ENCODE measurements at regions of chr12 and their contacts with region 1.

Region 1: DNA sequence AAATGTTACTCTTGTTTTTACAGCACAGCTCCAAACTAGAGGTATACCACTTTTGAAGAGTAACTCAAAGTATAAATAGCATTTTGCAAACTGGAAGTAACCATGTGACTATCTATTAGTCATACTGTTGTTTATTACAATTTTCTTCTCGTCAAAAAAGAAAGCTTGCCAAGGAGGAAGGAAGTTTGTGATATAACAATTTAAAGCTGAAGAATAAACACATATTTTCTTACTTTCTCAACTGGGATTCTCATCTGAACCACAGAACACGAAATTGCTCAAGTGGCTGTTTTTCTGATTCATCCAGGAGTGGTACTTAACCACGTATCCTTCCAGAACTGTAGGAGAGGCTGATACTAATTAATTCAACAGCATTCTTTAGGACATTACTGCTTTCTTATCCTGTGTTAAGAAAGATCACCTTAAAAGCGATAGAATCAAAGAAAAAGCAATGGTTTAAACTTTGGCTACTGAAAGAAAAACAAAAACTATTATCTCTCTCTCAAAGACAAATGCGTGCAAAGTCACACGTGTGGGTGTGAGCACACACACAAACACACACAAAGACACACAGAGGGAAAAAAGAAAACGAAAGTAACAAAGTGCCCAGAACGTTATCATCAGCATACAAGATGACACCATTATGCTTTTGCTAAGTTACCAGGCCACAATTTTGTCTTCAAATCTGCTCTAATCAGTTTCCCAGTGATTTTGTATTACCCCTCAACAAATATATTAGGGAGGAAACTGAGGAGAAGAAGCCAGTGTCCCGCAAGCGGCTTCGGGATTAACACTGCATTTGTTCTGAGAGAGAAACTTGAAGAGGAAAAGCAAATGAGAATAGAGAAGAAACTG is at the start of gene CLEC2B:
- DNase-seq: peak; percentile 17
- H3K4me3 Mint-ChIP-seq: peak within 1 kb of the TSS; percentile 93
- H3K27ac Mint-ChIP-seq: peak within 1 kb of the TSS; percentile 97
- H3K4me1 Mint-ChIP-seq: peaks cover 45% of the 10 kb centered on the region
- H3K27me3 Mint-ChIP-seq: no peaks in the 10 kb centered on the region
- total RNA-seq, gene CLEC2B: 13.1 and 14.3 TPM in 2 replicates

Region 2: GRCh38 chr12:9244894-9245293 is 624.6 kb before region 1 on chr12:
- intact Hi-C with region 1: loop called (anchors 2 kb)
- DNase-seq: no peak
- H3K4me3 Mint-ChIP-seq: peak overlapping the region; percentile 66
- H3K27ac Mint-ChIP-seq: peak overlapping the region; percentile 95
- H3K4me1 Mint-ChIP-seq: peaks cover 23% of the 10 kb centered on the region
- H3K27me3 Mint-ChIP-seq: peaks cover 2% of the 10 kb centered on the region

Region 3: GRCh38 chr12:9673404-9674225 is 195.9 kb before region 1 on chr12:
- intact Hi-C with region 1: loop called (anchors 2 kb)
- DNase-seq: no peak
- H3K4me3 Mint-ChIP-seq: peak overlapping the region; percentile 90
- H3K27ac Mint-ChIP-seq: peak overlapping the region; percentile 97
- H3K4me1 Mint-ChIP-seq: peaks cover 73% of the 10 kb centered on the region
- H3K27me3 Mint-ChIP-seq: no peaks in the 10 kb centered on the region

Region 4: DNA sequence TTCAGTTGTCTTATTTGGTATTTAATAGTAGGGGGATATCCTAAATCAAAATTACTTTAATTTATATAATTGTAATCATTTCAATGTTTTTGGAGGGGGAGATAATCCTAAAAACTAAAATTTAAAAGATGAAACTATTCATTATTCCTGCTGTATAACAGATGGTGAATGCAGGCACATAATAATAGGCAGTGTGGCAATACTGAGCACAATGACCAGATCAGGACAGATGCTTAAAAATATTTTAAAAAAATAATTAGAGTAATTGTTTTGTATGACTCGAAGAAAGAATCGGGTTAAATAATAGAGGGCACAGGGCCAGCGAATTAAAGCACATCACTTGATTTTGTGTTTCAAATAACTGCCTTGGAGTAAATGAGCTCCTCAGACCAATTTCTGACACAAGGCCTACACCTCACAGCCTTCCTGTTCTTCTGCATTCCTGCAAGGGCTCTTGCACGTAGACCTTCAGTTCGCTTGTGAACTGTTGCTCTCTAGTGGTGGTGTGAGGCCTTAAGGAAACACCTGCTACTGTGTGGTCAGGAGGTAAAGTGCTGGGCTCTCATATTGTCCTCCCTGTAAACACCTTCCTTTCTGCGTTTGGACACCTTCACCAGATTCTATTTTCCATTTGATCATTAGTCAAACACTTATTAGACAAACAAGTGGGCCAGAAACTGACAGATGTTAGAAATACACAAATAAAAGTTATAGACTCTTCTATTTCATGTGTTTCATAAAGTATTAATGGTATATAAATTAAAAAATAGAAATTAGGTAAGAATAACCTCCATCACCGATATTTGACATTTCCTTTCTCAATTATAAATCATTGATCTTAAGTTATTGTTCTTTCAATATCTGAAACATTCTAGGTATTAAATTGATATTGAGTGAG is 71.6 kb before region 1 on chr12:
- intact Hi-C with region 1: loop called (anchors 1 kb)
- DNase-seq: peak; percentile 73
- H3K4me3 Mint-ChIP-seq: peak overlapping the region; percentile 46
- H3K27ac Mint-ChIP-seq: peak overlapping the region; percentile 41
- H3K4me1 Mint-ChIP-seq: peaks cover 49% of the 10 kb centered on the region
- H3K27me3 Mint-ChIP-seq: peaks cover 5% of the 10 kb centered on the region

Region 5: GRCh38 chr12:9925708-9926393 is 56.3 kb after region 1 on chr12:
- intact Hi-C with region 1: loop called (anchors 1 kb)
- DNase-seq: no peak
- H3K4me3 Mint-ChIP-seq: peak overlapping the region; percentile 66
- H3K27ac Mint-ChIP-seq: no peak overlapping the region
- H3K4me1 Mint-ChIP-seq: peaks cover 22% of the 10 kb centered on the region
- H3K27me3 Mint-ChIP-seq: peaks cover 13% of the 10 kb centered on the region

Region 6: GRCh38 chr12:10304161-10304574 is 434.6 kb after region 1 on chr12:
- intact Hi-C with region 1: loop called (anchors 5 kb)
- DNase-seq: peak; percentile 34
- H3K4me3 Mint-ChIP-seq: no peak overlapping the region
- H3K27ac Mint-ChIP-seq: peak overlapping the region; percentile 54
- H3K4me1 Mint-ChIP-seq: peaks cover 51% of the 10 kb centered on the region
- H3K27me3 Mint-ChIP-seq: peaks cover 7% of the 10 kb centered on the region

Measured in activated T-helper 1 cell treated with anti-CD3 and anti-CD28 coated beads, Interleukin-12 subunit alpha, Interleukin-12 subunit beta, Interleukin-2, Interleukin-4 antibody, amounts not matched to agents 30 ng/mL and 10 ng/mL and 1 ng/mL, durations not matched to agents 14 hours and 24 hours and 36 hours (primary cell).